ENCODE measurements at regions of chr7 and their contacts with region 1.

Region 1: DNA sequence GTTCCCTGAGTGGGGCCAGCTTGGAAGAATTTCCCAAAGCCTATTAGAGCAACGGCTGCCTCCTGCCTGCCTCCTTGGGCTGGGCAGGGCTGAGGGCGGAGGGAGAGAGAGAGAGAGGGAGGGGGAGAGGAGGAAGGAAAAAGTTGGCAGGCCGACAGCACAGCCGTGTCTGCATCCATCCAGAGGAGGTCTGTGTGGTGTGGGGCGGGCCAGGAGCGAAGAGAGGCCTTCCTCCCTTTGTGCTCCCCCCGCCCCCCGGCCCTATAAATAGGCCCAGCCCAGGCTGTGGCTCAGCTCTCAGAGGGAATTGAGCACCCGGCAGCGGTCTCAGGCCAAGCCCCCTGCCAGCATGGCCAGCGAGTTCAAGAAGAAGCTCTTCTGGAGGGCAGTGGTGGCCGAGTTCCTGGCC is at the start of gene AQP1:
- DNase-seq: peak; percentile 87 to 92
- ATAC-seq: peak; percentile 52 to 76 (median 74)
- H3K4me3 ChIP-seq: peak within 1 kb of the TSS; percentile 30 to 70 (median 54)
- H3K27ac ChIP-seq: peak within 1 kb of the TSS; percentile 69 to 91 (median 85)
- H3K4me1 ChIP-seq: peaks cover 40 to 96% (median 81%) of the 10 kb centered on the region in 9 donors
- H3K27me3 ChIP-seq: no peaks in the 10 kb centered on the region
- CTCF ChIP-seq: peak in 4 of 9 donors; percentile 11 to 33 (median 30)
- total RNA-seq, gene AQP1: 101 to 274 (median 171) TPM

Region 2: DNA sequence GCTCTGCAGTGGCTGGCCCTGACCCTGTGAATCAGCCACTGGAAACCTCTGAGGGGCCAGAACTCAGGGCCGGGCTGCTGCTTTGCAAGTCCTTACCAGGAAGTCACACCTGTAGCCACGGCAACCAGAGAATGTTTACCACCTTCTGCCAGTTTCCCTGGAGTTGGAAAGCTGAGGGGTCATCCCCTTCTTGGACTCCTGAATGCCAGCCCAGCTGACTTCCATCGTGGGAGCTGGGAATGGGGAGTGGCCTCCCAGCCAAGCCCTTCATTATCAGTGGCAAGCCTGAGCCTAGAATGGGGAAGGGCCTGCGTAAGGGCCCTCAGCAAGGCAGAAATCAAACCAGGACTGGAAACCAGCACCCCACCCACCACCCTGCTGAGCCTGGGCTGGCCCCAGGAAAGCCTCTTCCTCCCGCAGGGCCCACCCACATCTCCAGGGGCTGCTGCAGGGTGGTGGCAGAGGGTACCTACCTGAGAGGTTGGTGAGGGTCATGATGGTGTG is 222.8 kb before region 1 on chr7:
- intact Hi-C with region 1: no loop called
- DNase-seq: peak in 1 of 2 donors; percentile 18
- ATAC-seq: peak in 1 of 8 donors; percentile 40
- H3K4me3 ChIP-seq: no peak overlapping the region
- H3K27ac ChIP-seq: peak overlapping the region in 1 of 10 donors; percentile 9
- H3K4me1 ChIP-seq: peaks cover 0 to 9% (median 0%) of the 10 kb centered on the region in 9 donors
- H3K27me3 ChIP-seq: peaks cover 0 to 18% (median 6%) of the 10 kb centered on the region in 7 donors
- CTCF ChIP-seq: no peak

Region 3: DNA sequence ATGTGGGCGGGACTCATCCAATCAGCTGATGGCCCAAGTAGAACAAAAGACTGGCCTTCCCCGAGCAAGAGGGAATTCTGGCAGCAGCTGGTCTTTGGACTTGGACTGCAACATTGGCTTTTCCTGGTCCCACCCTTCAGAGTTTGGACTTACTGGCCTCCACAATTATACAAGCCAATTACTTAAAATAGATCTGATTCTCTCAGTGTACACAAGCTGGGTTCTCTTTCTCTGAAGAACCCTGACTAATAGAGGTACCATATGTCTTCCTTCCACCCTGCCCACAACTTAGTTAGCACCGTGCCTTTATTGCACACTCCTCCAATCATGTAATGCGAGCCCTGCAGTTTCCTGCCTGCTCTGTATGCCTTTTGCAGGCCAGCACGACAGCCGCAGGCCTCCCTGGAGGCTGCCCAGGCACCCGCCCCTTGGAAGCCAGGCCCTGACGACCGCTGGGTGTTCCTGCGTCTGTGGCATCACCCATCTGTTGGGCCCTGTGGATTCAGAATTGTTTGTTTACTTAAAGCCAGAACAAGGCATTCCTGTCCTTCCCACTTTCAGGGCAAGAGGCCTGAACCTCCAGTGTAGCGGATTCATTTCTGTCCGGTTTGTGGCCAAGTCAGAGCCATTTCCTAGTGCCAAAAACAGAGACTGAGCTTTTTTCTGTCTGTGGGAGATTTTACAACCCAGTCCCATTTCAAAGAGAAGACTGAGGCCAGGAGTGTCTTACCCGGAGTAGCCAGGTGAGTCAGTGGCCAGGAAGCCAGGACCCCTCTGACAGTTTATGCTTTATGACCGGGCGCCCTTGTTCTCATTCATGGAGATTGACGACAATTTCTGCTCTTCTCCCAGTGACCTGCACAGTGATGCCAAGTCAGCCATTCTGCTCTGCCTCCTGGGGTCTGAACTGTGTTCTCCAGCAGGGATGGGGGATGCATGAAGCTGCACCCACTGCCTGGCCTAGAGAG is 160.6 kb before region 1 on chr7:
- intact Hi-C with region 1: loop called in 1 of 10 experiments (anchors 5 kb)
- DNase-seq: peak; percentile 73 to 83
- ATAC-seq: peak; percentile 65 to 84 (median 76)
- H3K4me3 ChIP-seq: peak overlapping the region in 8 of 10 donors; percentile 42 to 59 (median 54)
- H3K27ac ChIP-seq: peak overlapping the region; percentile 62 to 93 (median 82)
- H3K4me1 ChIP-seq: peaks cover 16 to 69% (median 48%) of the 10 kb centered on the region in 9 donors
- H3K27me3 ChIP-seq: no peaks in the 10 kb centered on the region
- CTCF ChIP-seq: no peak

Region 4: DNA sequence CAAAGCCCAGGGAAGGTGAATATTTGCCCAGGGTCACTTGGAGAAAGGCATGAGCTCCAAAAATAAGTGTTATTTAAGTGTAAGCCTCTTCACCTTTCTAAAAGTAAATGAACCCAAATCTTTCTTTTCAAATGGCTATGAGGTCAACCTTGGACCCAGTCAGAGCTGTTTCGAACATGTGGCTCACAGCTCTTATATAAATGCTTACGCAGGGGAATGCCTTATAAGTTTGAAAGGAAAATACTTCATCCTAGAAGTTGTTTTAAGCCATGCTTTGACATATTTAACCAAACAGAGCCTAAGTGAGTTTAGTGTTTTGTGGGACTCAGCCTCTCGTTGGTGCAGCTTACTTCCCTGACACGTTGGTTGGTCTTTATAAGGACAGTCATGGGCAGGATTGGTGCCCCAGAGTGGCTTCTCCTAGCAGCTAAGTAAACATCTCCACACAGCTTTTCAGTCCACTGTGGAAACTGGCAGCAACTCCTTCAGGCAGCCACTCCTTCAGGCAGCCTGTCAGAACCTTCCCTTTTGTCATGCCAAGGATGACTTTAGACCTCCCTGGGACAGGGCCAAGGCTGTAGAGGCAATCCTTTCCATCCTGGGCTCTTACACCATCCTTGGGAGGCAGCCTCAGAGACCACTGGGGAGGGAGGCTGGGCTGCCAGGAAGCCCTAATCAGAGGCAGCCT is 96.7 kb before region 1 on chr7:
- intact Hi-C with region 1: loop called in 4 of 10 experiments (anchors 5 to 10 kb)
- DNase-seq: peak in 1 of 2 donors; percentile 25
- ATAC-seq: peak; percentile 4 to 78 (median 24)
- H3K4me3 ChIP-seq: no peak overlapping the region
- H3K27ac ChIP-seq: peak overlapping the region; percentile 24 to 91 (median 81)
- H3K4me1 ChIP-seq: peaks cover 11 to 58% (median 47%) of the 10 kb centered on the region in 9 donors
- H3K27me3 ChIP-seq: no peaks in the 10 kb centered on the region
- CTCF ChIP-seq: no peak

Region 5: DNA sequence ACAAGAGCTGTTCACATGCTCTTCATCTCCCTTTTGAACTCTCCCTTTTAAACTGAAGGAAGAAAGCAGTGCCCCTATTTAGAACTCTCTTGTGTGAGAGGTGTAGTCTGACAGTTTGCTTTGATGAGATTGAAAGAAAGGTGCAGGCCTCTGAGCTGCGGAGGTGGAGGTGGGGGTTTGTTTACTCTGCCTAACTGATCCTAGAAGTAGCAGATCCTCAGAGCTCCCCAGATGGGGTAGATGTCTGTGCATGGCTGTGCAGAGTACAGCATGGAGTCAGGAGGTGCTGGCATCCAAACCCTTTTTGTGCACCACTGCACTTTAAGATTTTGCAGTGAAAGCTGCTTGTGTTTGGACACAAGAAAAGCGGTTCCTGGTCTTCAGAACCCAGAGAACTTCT is 82.1 kb before region 1 on chr7:
- intact Hi-C with region 1: loop called in 1 of 10 experiments (anchors 10 kb)
- DNase-seq: no peak
- ATAC-seq: no peak
- H3K4me3 ChIP-seq: no peak overlapping the region
- H3K27ac ChIP-seq: no peak overlapping the region
- H3K4me1 ChIP-seq: no peaks in the 10 kb centered on the region
- H3K27me3 ChIP-seq: no peaks in the 10 kb centered on the region
- CTCF ChIP-seq: no peak

Region 6: GRCh38 chr7:30869794-30870611 is 41.6 kb before region 1 on chr7:
- intact Hi-C with region 1: loop called in 1 of 10 experiments (anchors 5 kb)
- DNase-seq: peak; percentile 54 to 75
- ATAC-seq: peak; percentile 47 to 82 (median 76)
- H3K4me3 ChIP-seq: no peak overlapping the region
- H3K27ac ChIP-seq: peak overlapping the region in 9 of 10 donors; percentile 39 to 71 (median 62)
- H3K4me1 ChIP-seq: peaks cover 10 to 78% (median 40%) of the 10 kb centered on the region in 9 donors
- H3K27me3 ChIP-seq: no peaks in the 10 kb centered on the region
- CTCF ChIP-seq: no peak

Measured in heart right ventricle (tissue), 16 donors.